Stomach (tissue), 19 donors: ENCODE measurements at regions of chr4 and their contacts with region 1.

Region 1: GRCh38 chr4:18593445-18594002 is 572.0 kb upstream of the LCORL start:
- DNase-seq: peak; percentile 49 to 90
- H3K4me3 ChIP-seq: no peak overlapping the region
- H3K27ac ChIP-seq: no peak overlapping the region
- H3K4me1 ChIP-seq: peaks cover 0 to 7% (median 3%) of the 10 kb centered on the region in 4 donors
- H3K27me3 ChIP-seq: no peaks in the 10 kb centered on the region
- CTCF ChIP-seq: peak in 5 of 7 experiments; percentile 66 to 85 (median 75)
- EP300 ChIP-seq: no peak
- POLR2A ChIP-seq: no peak

Region 2: DNA sequence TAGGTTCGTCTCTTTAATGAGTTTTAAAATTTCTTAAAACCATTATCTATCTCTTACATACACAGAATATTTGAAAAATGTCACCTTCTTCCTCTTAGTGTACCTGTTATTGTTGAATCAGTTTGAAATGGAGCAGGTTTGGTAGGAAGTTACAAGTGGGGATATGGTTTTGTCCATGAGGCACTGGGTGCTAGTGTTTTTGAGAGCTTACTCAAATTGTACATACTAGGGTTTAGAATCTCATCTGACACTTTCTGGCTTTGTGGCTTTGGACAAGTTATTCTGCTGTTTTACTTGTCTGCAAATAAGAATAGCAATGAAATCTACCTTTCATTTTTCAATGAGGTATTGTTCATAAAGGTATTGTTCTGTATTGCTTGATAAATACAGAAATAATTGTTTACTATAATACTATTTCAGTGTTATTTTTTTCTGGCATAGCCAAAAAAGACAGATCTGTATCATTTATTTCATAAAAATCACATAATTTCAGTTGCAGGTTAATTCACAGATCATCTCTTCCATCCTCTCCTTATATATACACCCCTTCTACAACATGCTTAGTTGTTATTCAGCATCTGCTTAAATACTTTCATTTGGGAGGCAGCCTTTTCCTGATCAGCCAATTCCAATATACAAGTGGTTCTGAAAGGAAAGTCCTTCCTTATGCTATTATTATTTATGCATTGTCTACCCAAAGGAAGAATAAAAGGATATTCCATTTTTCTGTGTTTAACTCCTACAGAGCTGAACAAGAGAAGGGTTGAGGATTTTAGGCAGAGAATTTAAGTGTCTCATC is 769.5 kb before region 1 on chr4:
- intact Hi-C with region 1: loop called (anchors 10 kb)
- DNase-seq: no peak
- H3K4me3 ChIP-seq: no peak overlapping the region
- H3K27ac ChIP-seq: no peak overlapping the region
- H3K4me1 ChIP-seq: no peaks in the 10 kb centered on the region
- H3K27me3 ChIP-seq: no peaks in the 10 kb centered on the region
- CTCF ChIP-seq: no peak
- EP300 ChIP-seq: no peak
- POLR2A ChIP-seq: no peak